HEK293 (cell line): ENCODE measurements at regions of chr6 and their contacts with region 1.

Region 1: DNA sequence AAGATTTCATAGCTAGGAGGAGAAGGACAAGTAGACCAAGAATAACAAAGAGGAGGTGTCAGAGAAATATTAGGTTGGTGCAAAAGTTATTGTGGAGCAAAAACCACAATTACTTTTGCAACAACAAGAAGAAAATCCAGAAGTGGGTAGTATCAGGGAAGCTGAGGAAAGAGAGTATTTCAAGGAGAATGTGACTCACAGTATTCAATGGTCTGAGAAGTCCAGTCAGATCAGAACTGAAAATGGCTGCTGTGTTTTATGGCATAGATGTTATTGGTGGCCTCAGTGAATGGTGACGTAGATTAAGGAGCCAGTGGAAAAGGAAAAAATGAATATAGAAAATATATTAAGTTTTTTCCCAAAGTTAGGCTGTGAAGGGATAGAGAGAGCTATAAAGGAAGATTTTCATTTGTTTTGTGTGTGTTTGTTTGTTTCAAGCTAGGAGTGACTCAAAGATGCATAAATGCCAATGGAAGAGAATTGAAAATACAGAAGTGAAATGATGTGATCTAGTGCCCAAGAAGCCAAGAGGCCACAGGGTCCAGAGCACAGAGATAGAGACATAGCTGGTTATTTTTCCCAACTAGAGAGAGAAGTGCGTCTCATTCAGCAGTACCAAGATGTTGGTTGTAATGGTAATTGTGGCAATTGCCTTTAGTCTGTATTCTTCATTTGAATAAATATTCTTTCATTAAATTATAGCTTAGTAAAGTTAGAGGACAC is 112.8 kb downstream of the ADTRP start:
- H3K4me3 ChIP-seq: no peak overlapping the region
- H3K27ac ChIP-seq: no peak overlapping the region
- H3K4me1 ChIP-seq: no peaks in the 10 kb centered on the region
- CTCF ChIP-seq: no peak

Region 2: GRCh38 chr6:11585426-11586016 is 80.2 kb before region 1 on chr6:
- CTCF ChIA-PET with region 1: no interaction called
- POLR2A ChIA-PET with region 1: no interaction called
- H3K4me3 ChIP-seq: no peak overlapping the region
- H3K27ac ChIP-seq: no peak overlapping the region
- H3K4me1 ChIP-seq: no peaks in the 10 kb centered on the region
- CTCF ChIP-seq: peak; percentile 53; the same call in 1 of the 2 replicates

Region 3: GRCh38 chr6:11609315-11610071 is 56.3 kb before region 1 on chr6:
- CTCF ChIA-PET with region 1: no interaction called
- POLR2A ChIA-PET with region 1: no interaction called
- H3K4me3 ChIP-seq: no peak overlapping the region
- H3K27ac ChIP-seq: no peak overlapping the region
- H3K4me1 ChIP-seq: no peaks in the 10 kb centered on the region
- CTCF ChIP-seq: no peak

Region 4: DNA sequence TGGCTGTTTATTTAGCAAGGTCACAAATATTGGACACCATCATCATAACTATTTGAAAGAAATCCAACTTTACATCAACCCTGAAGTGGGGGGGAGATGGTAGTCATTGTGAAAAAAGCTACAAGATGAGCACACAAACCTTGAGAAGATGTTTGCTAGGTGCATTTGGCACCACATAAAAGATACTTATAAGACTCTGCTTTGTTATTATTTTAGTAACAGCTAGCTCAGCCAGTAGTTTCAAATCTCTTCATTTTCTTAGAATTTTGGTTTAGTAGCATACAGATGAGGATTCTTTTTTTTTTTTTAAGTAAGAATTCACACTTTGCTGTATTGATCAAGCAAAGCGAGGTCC is 98.5 kb after region 1 on chr6:
- CTCF ChIA-PET with region 1: no interaction called
- POLR2A ChIA-PET with region 1: interaction called, 10 read pairs
- H3K4me3 ChIP-seq: no peak overlapping the region
- H3K27ac ChIP-seq: no peak overlapping the region
- H3K4me1 ChIP-seq: no peaks in the 10 kb centered on the region
- CTCF ChIP-seq: no peak